ENCODE measurements at regions of chr1 and their contacts with region 1.

Region 1: GRCh38 chr1:34852677-34853217 is 6.8 kb downstream of the SMIM12 start:
- DNase-seq: peak; percentile 91
- CTCF ChIP-seq: peak; percentile 92

Region 2: GRCh38 chr1:34726861-34727260 is 125.9 kb before region 1 on chr1:
- in situ Hi-C with region 1: no loop called
- DNase-seq: no peak
- CTCF ChIP-seq: no peak

Region 3: GRCh38 chr1:34786521-34787325 is 66.0 kb before region 1 on chr1:
- in situ Hi-C with region 1: loop called (anchors 5 kb)
- DNase-seq: peak; percentile 85
- CTCF ChIP-seq: peak; percentile 88